Calu3 (cell line): ENCODE measurements at regions of chr18 and their contacts with region 1.

Region 1: GRCh38 chr18:44033144-44033701 is 647.5 kb upstream of the SETBP1 start:
- DNase-seq: peak; percentile 64
- H3K4me3 Mint-ChIP-seq: no peak overlapping the region
- H3K27ac Mint-ChIP-seq: peak overlapping the region; percentile 48
- H3K4me1 Mint-ChIP-seq: peaks cover 30% of the 10 kb centered on the region
- H3K27me3 Mint-ChIP-seq: no peaks in the 10 kb centered on the region
- CTCF ChIP-seq: no peak

Region 2: DNA sequence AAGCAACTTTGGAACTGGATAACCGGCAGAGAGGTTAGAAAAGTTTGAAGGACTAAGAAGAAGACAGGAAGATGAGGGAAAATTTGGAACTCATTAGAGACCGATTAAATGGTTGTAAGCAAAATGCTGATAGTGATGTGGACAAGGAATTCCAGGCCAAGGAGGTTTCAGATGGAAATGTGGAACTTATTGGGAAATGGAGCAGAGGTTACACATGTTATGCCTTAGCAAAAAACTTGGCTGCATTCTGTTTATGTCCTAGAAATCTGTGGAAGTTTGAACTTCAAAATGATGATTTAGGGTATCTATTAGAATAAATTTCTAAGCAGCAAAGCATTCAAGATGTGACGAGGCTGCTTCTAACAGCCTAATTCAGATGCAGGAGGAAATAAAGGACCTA is 80.8 kb before region 1 on chr18:
- CTCF ChIA-PET with region 1: no interaction called
- intact Hi-C with region 1: no loop called
- DNase-seq: no peak
- H3K4me3 Mint-ChIP-seq: no peak overlapping the region
- H3K27ac Mint-ChIP-seq: no peak overlapping the region
- H3K4me1 Mint-ChIP-seq: no peaks in the 10 kb centered on the region
- H3K27me3 Mint-ChIP-seq: no peaks in the 10 kb centered on the region
- CTCF ChIP-seq: no peak

Region 3: GRCh38 chr18:44079606-44080005 is 46.4 kb after region 1 on chr18:
- CTCF ChIA-PET with region 1: no interaction called
- intact Hi-C with region 1: loop called (anchors 2 kb)
- DNase-seq: peak; percentile 35
- H3K4me3 Mint-ChIP-seq: peak overlapping the region; percentile 39
- H3K27ac Mint-ChIP-seq: peak overlapping the region; percentile 87
- H3K4me1 Mint-ChIP-seq: peaks cover 39% of the 10 kb centered on the region
- H3K27me3 Mint-ChIP-seq: no peaks in the 10 kb centered on the region
- CTCF ChIP-seq: no peak